ENCODE measurements at regions of chr9 and their contacts with region 1.

Region 1: DNA sequence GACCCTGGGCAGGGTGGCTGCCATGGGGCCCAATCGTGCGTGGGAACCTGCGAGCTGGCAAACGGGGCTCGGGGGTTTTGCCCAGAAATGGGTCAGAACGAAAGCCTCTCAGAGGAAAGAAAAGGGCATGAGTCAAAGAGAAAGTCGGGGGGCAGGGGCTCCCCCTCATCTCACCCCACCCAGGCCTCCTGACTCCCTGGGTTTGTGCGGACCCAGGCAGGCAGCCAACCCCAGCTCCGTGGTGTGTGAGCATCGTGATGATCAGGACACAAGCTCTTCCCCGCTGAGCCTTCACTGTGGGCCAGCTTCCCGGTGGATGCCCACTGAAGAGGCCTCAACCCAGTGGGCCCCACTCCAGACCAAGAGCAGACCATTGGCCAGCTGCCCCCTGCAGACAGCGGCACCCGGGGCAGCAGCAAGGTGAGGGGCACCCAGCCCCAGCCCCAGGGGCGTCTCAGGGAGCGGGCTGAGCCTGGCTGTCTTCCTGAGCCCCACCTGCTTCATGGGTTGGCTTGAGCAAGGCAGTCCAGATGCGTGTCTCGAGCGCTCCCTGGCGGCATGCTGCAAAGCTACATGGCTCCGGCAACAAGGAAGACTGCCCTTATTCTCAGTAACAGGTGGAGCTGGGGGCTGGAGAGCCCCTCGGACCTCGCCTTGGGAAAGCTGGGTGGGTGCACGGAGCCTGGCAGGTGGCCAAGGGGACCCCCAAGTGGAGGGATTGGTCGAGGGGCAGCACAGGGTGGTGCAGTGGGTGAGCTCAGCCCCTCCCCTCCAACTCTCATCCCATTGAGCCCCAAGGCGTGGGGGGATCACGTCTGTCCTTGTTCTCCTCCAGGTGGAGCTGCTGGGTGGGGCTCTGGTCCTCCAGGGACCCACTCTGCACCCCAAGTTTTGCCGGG is 3.2 kb upstream of the FUT7 start:
- DNase-seq: peak; percentile 92
- ATAC-seq: peak; percentile 92
- H3K4me3 Mint-ChIP-seq: peak overlapping the region; percentile 69
- H3K27ac Mint-ChIP-seq: peak overlapping the region; percentile 89
- H3K4me1 Mint-ChIP-seq: peaks cover 48% of the 10 kb centered on the region
- H3K27me3 Mint-ChIP-seq: no peaks in the 10 kb centered on the region

Region 2: DNA sequence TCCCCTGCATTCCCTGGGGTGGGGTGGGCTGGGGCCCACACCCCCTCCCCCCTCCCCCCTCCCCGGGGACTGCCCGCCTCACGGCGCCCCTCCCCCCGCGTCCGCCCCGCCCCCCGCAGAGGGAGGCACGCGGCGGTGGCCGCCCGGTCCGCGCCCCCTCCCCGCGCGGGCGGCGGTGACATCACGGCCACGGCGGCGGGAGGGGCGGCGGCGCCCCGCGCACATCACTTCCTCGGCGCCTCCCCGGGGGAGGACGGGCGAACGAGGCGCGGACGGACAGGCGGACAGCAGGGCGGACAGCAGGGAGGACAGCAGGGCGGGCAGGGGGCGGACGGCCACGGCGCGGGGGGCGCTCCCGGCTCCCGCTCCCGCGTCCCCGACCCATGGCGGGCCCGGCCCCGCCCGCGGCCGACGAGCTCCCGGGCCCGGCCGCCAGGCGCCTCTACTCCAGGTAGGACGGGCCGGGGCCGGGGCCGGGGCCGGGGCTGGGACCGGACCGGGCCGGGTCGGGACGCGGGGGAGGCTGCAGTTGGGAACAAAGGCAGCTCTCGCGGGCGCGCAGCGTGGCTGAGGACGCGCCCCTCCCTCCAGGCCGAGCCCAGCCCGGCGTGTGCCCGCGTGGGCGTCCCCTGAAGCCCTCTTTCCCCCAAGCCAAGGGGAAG is 707.7 kb before region 1 on chr9 and contains the start of gene GPSM1:
- CTCF ChIA-PET with region 1: no interaction called
- POLR2A ChIA-PET with region 1: no interaction called
- DNase-seq: peak; percentile 33
- ATAC-seq: peak; percentile 65
- H3K4me3 Mint-ChIP-seq: peak within 1 kb of the TSS; percentile 49
- H3K27ac Mint-ChIP-seq: no peak within 1 kb of the TSS
- H3K4me1 Mint-ChIP-seq: no peaks in the 10 kb centered on the region
- H3K27me3 Mint-ChIP-seq: peaks cover 2% of the 10 kb centered on the region
- total RNA-seq, gene GPSM1: 1.8 to 2.3 TPM

Region 3: DNA sequence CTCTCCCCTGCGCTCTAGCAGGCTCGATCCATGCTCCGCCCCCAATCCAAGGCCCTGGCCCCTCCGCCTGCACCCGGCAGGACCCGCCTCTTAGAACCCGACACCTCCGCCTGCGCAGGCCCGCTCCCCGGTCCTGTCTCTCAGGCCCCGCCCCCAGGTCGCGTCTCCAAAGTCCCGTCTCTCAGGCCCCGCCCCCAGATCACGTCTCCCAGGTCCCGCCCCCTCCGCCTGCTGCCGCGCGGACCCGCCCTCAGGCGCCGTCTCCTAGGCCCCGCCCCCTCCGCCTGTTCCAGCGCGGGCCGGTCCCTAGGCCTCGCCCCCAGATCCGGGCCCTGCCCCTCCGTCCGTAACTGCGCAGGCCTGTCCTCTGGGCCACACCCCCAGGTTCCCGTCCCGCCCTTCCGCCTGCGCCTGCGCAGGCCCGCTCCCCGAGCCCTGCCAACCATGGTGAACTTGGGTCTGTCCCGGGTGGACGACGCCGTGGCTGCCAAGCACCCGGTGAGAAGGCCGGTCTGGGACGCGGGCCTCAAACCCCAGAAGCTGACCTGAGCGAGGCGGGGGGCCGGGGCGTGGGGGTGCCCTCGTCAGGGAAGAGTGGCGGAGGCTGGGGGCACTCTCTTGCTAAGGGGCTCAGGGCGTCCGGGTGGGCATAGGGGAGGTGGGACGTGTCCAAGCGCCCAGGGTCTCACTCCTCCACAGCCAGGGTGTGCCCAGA is 244.0 kb before region 1 on chr9 and contains the start of gene TMEM141:
- CTCF ChIA-PET with region 1: interaction called, 35 read pairs
- POLR2A ChIA-PET with region 1: no interaction called
- DNase-seq: peak; percentile 100
- ATAC-seq: peak; percentile 93
- H3K4me3 Mint-ChIP-seq: peak within 1 kb of the TSS; percentile 82
- H3K27ac Mint-ChIP-seq: peak within 1 kb of the TSS; percentile 93
- H3K4me1 Mint-ChIP-seq: peaks cover 47% of the 10 kb centered on the region
- H3K27me3 Mint-ChIP-seq: peaks cover 4% of the 10 kb centered on the region
- total RNA-seq, gene TMEM141: 39.9 to 43.2 TPM

Region 4: GRCh38 chr9:136885950-136886578 is 149.0 kb before region 1 on chr9 and contains the start of gene TRAF2:
- CTCF ChIA-PET with region 1: interaction called, 16 read pairs
- POLR2A ChIA-PET with region 1: no interaction called
- DNase-seq: peak; percentile 98
- ATAC-seq: peak; percentile 93
- H3K4me3 Mint-ChIP-seq: peak within 1 kb of the TSS; percentile 98
- H3K27ac Mint-ChIP-seq: peak within 1 kb of the TSS; percentile 89
- H3K4me1 Mint-ChIP-seq: peaks cover 51% of the 10 kb centered on the region
- H3K27me3 Mint-ChIP-seq: no peaks in the 10 kb centered on the region
- total RNA-seq, gene TRAF2: 48.5 to 57.2 TPM

Region 5: DNA sequence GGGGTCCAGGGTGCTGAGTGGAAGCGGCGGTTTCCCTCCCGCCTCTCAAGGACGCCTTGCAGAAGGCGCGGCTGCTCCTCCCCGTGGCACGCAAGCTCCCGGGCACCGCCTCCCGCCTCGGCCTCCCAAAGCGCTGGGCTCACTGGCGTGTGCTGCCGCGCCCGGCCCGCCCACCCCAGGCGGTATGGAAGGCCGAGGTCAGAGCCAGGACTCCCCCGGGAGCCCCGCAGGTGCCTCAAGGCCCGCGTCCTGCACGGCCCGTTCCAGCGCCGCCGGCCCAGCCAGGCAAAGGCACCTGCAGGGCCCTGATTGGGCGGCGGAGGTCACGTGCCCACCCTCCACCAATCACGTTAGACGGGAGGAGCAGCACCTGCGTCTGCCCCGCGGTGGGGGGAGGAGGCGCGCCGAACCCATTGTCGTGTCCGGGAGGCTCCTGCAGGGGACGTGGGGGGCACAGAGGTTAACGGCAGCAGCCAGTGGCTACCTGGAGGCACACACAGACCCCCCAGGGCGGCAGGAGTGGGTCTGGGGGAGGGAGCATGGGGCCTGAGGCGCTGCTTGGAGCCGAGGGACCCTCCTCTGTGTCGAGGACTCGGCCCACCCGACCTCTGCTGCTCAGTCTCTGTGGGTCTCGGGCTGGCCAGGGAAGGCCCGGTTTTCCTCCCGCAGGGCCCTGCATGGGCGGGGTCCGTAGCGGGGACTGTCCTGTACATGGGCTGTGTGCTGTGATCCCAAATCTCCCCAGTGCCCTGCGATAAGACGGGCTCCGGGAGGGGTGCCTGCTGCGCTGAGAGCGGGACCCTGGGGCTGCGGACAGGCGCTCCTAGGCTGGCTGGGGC is 85.1 kb before region 1 on chr9:
- CTCF ChIA-PET with region 1: interaction called, 146 read pairs
- POLR2A ChIA-PET with region 1: interaction called, 11 read pairs
- DNase-seq: peak; percentile 98
- ATAC-seq: peak; percentile 97
- H3K4me3 Mint-ChIP-seq: peak overlapping the region; percentile 84
- H3K27ac Mint-ChIP-seq: peak overlapping the region; percentile 90
- H3K4me1 Mint-ChIP-seq: peaks cover 17% of the 10 kb centered on the region
- H3K27me3 Mint-ChIP-seq: no peaks in the 10 kb centered on the region

Region 6: DNA sequence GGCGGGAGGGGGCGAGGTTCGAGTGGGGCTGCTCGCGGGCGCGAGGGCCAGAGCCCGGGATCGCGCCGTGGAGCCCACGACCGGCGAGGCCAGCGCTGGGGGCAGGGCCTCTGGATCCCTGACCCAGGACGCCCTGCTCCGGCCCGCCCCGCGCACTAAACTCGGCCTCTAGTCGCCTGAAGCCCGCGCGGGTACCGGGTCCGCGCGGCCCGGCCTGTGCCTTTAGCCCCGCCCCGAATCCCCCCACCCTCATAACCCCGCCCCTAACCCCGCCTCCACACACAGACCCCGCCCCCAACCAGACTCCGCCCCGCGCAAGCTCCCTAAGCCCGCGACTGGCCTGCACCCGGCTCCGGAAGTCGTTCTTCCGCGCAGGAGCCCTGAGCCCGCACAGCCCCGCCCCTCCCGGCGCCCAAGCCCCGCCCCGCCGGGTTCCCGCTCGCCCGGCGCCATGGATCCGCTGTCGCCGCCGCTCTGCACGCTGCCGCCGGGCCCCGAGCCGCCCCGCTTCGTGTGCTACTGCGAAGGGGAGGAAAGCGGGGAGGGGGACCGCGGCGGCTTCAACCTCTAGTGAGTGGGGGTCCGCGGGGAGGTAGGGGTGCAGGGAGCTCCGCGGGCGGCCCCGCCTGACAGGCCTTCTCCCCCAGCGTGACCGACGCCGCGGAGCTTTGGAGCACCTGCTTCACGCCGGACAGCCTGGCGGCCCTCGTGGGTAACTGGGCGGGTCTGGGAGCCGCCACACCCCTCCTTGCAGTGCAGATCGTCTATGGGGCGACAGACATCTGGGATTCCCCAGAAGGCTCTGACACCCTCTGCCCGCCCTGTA is 42.9 kb before region 1 on chr9 and contains the start of gene PAXX:
- CTCF ChIA-PET with region 1: interaction called, 43 read pairs
- POLR2A ChIA-PET with region 1: no interaction called
- DNase-seq: peak; percentile 96
- ATAC-seq: peak; percentile 87
- H3K4me3 Mint-ChIP-seq: peak within 1 kb of the TSS; percentile 84
- H3K27ac Mint-ChIP-seq: peak within 1 kb of the TSS; percentile 87
- H3K4me1 Mint-ChIP-seq: peaks cover 37% of the 10 kb centered on the region
- H3K27me3 Mint-ChIP-seq: peaks cover 15% of the 10 kb centered on the region
- total RNA-seq, gene PAXX: 80.6 to 85.2 TPM

Region 7: GRCh38 chr9:137006116-137007003 is 28.8 kb before region 1 on chr9:
- CTCF ChIA-PET with region 1: interaction called, 25 read pairs
- POLR2A ChIA-PET with region 1: no interaction called
- DNase-seq: no peak
- ATAC-seq: no peak
- H3K4me3 Mint-ChIP-seq: no peak overlapping the region
- H3K27ac Mint-ChIP-seq: peak overlapping the region; percentile 39
- H3K4me1 Mint-ChIP-seq: peaks cover 14% of the 10 kb centered on the region
- H3K27me3 Mint-ChIP-seq: no peaks in the 10 kb centered on the region

Region 8: GRCh38 chr9:137064027-137064879 is 29.1 kb after region 1 on chr9:
- CTCF ChIA-PET with region 1: interaction called, 32 read pairs
- POLR2A ChIA-PET with region 1: interaction called, 4 read pairs
- DNase-seq: peak; percentile 63
- ATAC-seq: no peak
- H3K4me3 Mint-ChIP-seq: no peak overlapping the region
- H3K27ac Mint-ChIP-seq: no peak overlapping the region
- H3K4me1 Mint-ChIP-seq: peaks cover 16% of the 10 kb centered on the region
- H3K27me3 Mint-ChIP-seq: no peaks in the 10 kb centered on the region